IMR-90 (cell line): ENCODE measurements at regions of chr16 and their contacts with region 1.

Region 1: DNA sequence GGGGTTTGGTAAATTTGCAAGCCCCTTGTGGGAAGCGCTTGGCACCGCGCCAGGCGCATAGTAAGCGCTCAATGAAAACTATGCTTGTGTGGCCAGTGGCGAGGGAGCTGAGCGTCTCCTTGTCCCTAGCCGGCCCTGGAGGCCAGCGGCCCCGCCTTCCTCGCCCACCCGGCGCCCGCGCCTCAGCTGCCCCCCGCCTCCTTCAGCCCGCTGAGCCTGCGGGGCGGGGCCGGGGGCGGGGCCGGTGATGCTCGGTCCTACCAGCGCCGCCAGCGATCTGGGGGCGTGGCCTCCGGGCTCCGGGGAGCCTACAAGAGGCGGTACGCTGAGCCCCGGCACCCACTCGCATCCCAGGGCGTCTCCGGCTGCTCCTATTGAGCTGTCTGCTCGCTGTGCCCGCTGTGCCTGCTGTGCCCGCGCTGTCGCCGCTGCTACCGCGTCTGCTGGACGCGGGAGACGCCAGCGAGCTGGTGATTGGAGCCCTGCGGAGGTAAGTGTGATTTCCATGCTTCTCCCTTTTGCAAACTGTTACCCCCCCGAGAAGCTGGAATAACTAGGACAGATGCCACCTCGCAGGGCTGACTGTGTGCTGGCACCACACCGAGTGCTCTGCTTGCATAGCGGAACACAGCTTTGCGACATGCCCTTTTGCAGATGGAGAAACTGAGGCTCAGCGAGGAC is at the start of gene CRISPLD2:
- DNase-seq: peak; percentile 84
- ATAC-seq: peak; percentile 99
- H3K4me3 ChIP-seq: peak within 1 kb of the TSS; percentile 52
- H3K27ac ChIP-seq: no peak within 1 kb of the TSS; the same call in 1 of the 2 replicates
- H3K4me1 ChIP-seq: peaks cover 25% of the 10 kb centered on the region
- H3K27me3 ChIP-seq: no peaks in the 10 kb centered on the region
- CTCF ChIP-seq: no peak
- POLR2A ChIP-seq: peak; percentile 99
- RAD21 ChIP-seq: no peak
- total RNA-seq, gene CRISPLD2: 35.0 and 37.5 TPM in 2 replicates

Region 2: GRCh38 chr16:84629580-84629979 is 190.2 kb before region 1 on chr16:
- CTCF ChIA-PET with region 1: no interaction called
- POLR2A ChIA-PET with region 1: no interaction called
- dilution Hi-C with region 1: no loop called
- in situ Hi-C with region 1: no loop called
- intact Hi-C with region 1: loop called (anchors 10 kb)
- DNase-seq: no peak
- ATAC-seq: no peak
- H3K4me3 ChIP-seq: no peak overlapping the region
- H3K27ac ChIP-seq: no peak overlapping the region
- H3K4me1 ChIP-seq: peaks cover 4% of the 10 kb centered on the region; the same call in 1 of the 2 replicates
- H3K27me3 ChIP-seq: no peaks in the 10 kb centered on the region
- CTCF ChIP-seq: no peak
- POLR2A ChIP-seq: no peak
- RAD21 ChIP-seq: no peak

Region 3: GRCh38 chr16:84699147-84699711 is 120.6 kb before region 1 on chr16:
- CTCF ChIA-PET with region 1: no interaction called
- POLR2A ChIA-PET with region 1: no interaction called
- dilution Hi-C with region 1: no loop called
- in situ Hi-C with region 1: no loop called
- intact Hi-C with region 1: no loop called
- DNase-seq: no peak
- ATAC-seq: peak; percentile 8
- H3K4me3 ChIP-seq: peak overlapping the region; percentile 92
- H3K27ac ChIP-seq: peak overlapping the region; percentile 48; the same call in 1 of the 2 replicates
- H3K4me1 ChIP-seq: peaks cover 6% of the 10 kb centered on the region
- H3K27me3 ChIP-seq: no peaks in the 10 kb centered on the region
- CTCF ChIP-seq: no peak
- POLR2A ChIP-seq: no peak
- RAD21 ChIP-seq: no peak

Region 4: DNA sequence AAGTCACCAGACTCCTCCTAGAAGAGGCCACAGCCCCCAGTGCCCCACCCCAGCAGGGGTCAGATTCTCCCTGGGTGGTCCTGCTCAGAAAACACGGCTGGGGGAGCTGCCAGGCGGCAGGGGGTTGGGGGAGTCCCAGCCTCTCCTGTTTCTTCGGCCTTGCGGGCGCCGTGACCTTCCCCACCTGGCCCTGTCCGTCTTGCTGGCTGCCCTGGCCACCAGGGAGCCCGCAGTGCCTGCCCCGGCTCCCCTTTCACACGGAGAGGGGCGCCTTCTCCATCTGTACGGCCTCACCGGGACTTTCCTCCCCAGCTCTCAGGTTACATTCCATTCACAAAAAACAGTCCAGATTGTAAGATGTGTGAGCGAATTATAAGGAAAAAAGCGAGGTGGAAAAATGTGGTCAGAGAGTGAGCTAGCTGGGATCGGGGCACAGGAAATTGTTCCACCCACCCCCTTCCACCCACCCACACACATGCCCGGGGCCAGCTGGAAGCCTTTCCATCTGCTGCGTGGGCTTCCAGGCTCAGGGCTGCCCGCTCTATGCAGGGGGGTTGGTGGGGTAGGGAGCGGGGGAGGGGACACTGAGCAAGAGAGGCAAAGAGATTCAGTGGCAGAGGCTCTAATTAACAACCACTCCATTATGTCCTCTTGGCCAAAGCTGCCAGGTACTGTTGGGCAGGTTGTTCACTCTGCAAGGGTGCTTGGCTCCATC is 307.1 kb after region 1 on chr16:
- CTCF ChIA-PET with region 1: no interaction called
- POLR2A ChIA-PET with region 1: no interaction called
- dilution Hi-C with region 1: no loop called
- in situ Hi-C with region 1: no loop called
- intact Hi-C with region 1: no loop called
- DNase-seq: peak; percentile 93
- ATAC-seq: peak; percentile 61
- H3K4me3 ChIP-seq: no peak overlapping the region
- H3K27ac ChIP-seq: peak overlapping the region; percentile 55
- H3K4me1 ChIP-seq: peaks cover 32% of the 10 kb centered on the region
- H3K27me3 ChIP-seq: no peaks in the 10 kb centered on the region
- CTCF ChIP-seq: no peak
- POLR2A ChIP-seq: no peak
- RAD21 ChIP-seq: peak; percentile 24; the same call in 1 of the 2 replicates